RWPE1 (cell line): ENCODE measurements at regions of chr15 and their contacts with region 1.

Region 1: GRCh38 chr15:63752075-63752684 is 81.6 kb downstream of the HERC1 start:
- DNase-seq: peak; percentile 61
- H3K27ac ChIP-seq: no peak overlapping the region
- CTCF ChIP-seq: peak; percentile 88

Region 2: GRCh38 chr15:64046347-64047153 is 294.4 kb after region 1 on chr15 and contains the start of gene DAPK2:
- CTCF ChIA-PET with region 1: interaction called, 23 read pairs
- POLR2A ChIA-PET with region 1: no interaction called
- DNase-seq: peak; percentile 85
- H3K27ac ChIP-seq: peak within 1 kb of the TSS; percentile 34
- CTCF ChIP-seq: peak; percentile 94

Region 3: GRCh38 chr15:64067564-64068030 is 315.4 kb after region 1 on chr15:
- CTCF ChIA-PET with region 1: interaction called, 32 read pairs
- POLR2A ChIA-PET with region 1: no interaction called
- DNase-seq: peak; percentile 71
- H3K27ac ChIP-seq: no peak overlapping the region
- CTCF ChIP-seq: peak; percentile 92